Activated T-helper 2 cell treated with anti-CD3 and anti-CD28 coated beads, Interferon-gamma antibody, Interleukin-2, Interleukin-4, amounts not matched to agents 10 μg/mL and 5 μg/mL and 100 μg/mL, durations not matched to agents 14 hours and 24 hours and 36 hours (primary cell): ENCODE measurements at regions of chr11 and their contacts with region 1.

Region 1: GRCh38 chr11:76152086-76152681 is 54.1 kb downstream of the WNT11 start:
- DNase-seq: peak; percentile 71
- H3K4me3 Mint-ChIP-seq: peak overlapping the region; percentile 55
- H3K27ac Mint-ChIP-seq: no peak overlapping the region
- H3K4me1 Mint-ChIP-seq: peaks cover 16% of the 10 kb centered on the region
- H3K27me3 Mint-ChIP-seq: peaks cover 32% of the 10 kb centered on the region

Region 2: GRCh38 chr11:75721855-75722668 is 430.1 kb before region 1 on chr11:
- intact Hi-C with region 1: loop called (anchors 1 kb)
- DNase-seq: no peak
- H3K4me3 Mint-ChIP-seq: no peak overlapping the region
- H3K27ac Mint-ChIP-seq: no peak overlapping the region
- H3K4me1 Mint-ChIP-seq: no peaks in the 10 kb centered on the region
- H3K27me3 Mint-ChIP-seq: peaks cover 2% of the 10 kb centered on the region

Region 3: DNA sequence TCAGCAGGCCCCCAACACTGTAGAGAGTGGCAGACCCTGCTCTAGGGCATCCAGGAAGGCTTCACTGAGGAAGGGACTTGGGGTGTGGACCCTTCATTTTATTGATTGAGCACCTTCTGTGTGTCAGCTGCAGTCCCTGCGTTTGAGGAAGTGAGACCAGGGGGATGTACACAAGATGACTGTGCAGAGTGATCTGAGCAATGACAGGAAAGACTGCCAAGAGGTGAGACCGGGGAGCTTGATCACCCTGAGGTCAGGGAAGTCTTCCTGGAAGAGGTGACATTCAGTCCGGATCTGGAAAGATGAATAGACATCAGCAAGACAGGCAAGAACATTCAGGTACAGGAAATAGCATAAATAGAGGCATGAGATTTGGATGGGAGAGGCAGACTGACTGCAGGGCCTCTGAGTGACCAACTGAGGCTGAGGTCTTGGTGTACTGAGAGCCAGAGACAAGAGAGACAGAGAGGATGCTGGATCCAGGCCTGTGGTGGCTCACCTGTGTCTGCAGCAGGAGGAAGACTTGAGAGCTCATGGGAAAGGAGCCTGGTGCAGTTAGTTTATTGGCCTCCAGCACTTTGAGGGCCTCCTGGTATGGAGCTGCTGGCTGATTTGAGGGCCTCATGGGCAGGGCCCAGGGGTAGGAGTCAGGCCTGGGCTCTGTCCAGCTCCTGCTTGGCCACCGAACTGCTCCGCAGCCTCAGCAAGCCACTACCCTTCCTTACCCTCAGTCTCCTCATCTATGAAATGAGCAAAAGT is 378.4 kb before region 1 on chr11:
- intact Hi-C with region 1: no loop called
- DNase-seq: no peak
- H3K4me3 Mint-ChIP-seq: no peak overlapping the region
- H3K27ac Mint-ChIP-seq: peak overlapping the region; percentile 34
- H3K4me1 Mint-ChIP-seq: peaks cover 28% of the 10 kb centered on the region
- H3K27me3 Mint-ChIP-seq: peaks cover 23% of the 10 kb centered on the region

Region 4: DNA sequence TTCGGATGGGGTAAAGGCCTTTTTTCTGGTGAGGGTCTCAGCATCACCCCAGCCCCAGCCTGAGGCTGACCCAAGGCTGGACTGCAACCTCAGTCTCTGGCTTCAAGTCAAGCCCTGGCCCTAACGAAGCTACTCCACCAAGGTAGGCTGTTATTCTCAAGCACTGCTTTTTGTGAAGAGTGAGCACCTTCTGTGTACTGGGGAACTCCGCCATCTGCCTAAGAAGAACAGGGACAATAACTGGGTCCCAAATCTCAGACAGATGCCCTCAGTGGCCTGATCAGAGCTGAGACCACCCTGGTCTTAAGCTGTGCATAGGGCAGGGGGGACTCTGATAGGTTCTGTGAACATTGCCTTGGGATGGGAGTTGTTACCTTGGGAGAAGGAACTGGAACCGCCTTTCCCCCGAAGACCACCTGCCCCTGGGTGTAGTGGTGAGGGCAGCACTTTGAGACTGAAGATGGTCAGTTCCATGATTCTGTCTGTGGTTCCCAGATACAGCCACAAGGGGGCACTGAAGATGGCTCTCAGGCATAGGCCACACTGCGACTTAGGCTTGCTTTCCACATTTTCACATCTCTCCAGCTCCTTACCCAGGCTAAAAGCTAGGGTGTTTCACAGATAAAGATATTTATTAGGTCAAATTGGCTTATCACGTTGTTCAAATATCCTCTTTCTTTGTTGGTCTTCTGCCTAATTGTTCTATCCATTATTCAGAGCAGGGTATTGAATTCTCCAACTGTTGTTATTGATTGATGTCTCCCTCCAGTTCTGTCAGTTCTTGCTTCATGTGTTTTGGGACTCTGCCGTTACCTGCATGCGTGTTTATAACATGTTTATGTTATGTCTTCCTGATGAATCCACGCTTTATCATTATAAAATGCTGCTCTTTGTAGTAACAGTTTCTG is 349.0 kb before region 1 on chr11:
- intact Hi-C with region 1: loop called (anchors 2 kb)
- DNase-seq: peak; percentile 52
- H3K4me3 Mint-ChIP-seq: no peak overlapping the region
- H3K27ac Mint-ChIP-seq: no peak overlapping the region
- H3K4me1 Mint-ChIP-seq: peaks cover 22% of the 10 kb centered on the region
- H3K27me3 Mint-ChIP-seq: peaks cover 4% of the 10 kb centered on the region

Region 5: GRCh38 chr11:75896843-75897419 is 255.3 kb before region 1 on chr11:
- intact Hi-C with region 1: loop called (anchors 1 kb)
- DNase-seq: no peak
- H3K4me3 Mint-ChIP-seq: no peak overlapping the region
- H3K27ac Mint-ChIP-seq: no peak overlapping the region
- H3K4me1 Mint-ChIP-seq: peaks cover 25% of the 10 kb centered on the region
- H3K27me3 Mint-ChIP-seq: peaks cover 4% of the 10 kb centered on the region

Region 6: DNA sequence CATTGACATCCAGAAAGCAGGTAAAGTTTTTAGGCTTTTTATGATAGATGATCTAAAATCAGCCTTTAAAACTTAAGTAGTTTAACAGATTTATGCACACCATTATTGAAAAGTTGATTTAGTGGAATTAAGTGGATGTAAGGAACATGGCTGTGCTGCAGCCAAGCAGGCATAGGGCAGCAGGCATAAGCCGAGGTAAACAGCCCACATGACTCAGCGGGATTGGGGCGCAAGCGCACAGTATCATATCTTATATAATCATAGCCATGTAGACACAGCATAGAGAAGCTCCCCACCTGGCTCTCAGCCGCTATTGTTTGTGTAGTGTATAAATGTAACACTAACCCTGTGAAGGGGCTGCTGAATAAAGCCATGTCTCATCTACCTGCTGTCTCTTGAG is 103.4 kb before region 1 on chr11:
- intact Hi-C with region 1: no loop called
- DNase-seq: no peak
- H3K4me3 Mint-ChIP-seq: no peak overlapping the region
- H3K27ac Mint-ChIP-seq: no peak overlapping the region
- H3K4me1 Mint-ChIP-seq: no peaks in the 10 kb centered on the region
- H3K27me3 Mint-ChIP-seq: no peaks in the 10 kb centered on the region